ENCODE measurements at regions of chr17 and their contacts with region 1.

Region 1: GRCh38 chr17:48307814-48308411 is 122.1 kb downstream of the SKAP1 start:
- DNase-seq: peak in 3 of 5 donors; percentile 10 to 28 (median 24)
- ATAC-seq: peak in 2 of 4 donors; percentile 53 to 58
- H3K4me3 ChIP-seq: no peak overlapping the region
- H3K27ac ChIP-seq: no peak overlapping the region
- H3K4me1 ChIP-seq: peaks cover 0 to 7% (median 0%) of the 10 kb centered on the region in 12 donors
- H3K27me3 ChIP-seq: peaks cover 0 to 86% (median 47%) of the 10 kb centered on the region in 9 donors
- CTCF ChIP-seq: peak; percentile 51 to 84 (median 69)
- POLR2A ChIP-seq: no peak

Region 2: GRCh38 chr17:48259694-48260291 is 48.1 kb before region 1 on chr17:
- intact Hi-C with region 1: loop called in 1 of 10 experiments (anchors 10 kb)
- DNase-seq: no peak
- ATAC-seq: no peak
- H3K4me3 ChIP-seq: no peak overlapping the region
- H3K27ac ChIP-seq: no peak overlapping the region
- H3K4me1 ChIP-seq: no peaks in the 10 kb centered on the region
- H3K27me3 ChIP-seq: peaks cover 0 to 26% (median 2%) of the 10 kb centered on the region in 9 donors
- CTCF ChIP-seq: peak in 10 of 12 donors; percentile 26 to 60 (median 43)
- POLR2A ChIP-seq: no peak